Posterior vena cava (tissue), 2 donors: ENCODE measurements at regions of chr4 and their contacts with region 1.

Region 1: GRCh38 chr4:117845270-117845669 is 189.0 kb upstream of the NDST3 start:
- DNase-seq: no peak

Region 2: DNA sequence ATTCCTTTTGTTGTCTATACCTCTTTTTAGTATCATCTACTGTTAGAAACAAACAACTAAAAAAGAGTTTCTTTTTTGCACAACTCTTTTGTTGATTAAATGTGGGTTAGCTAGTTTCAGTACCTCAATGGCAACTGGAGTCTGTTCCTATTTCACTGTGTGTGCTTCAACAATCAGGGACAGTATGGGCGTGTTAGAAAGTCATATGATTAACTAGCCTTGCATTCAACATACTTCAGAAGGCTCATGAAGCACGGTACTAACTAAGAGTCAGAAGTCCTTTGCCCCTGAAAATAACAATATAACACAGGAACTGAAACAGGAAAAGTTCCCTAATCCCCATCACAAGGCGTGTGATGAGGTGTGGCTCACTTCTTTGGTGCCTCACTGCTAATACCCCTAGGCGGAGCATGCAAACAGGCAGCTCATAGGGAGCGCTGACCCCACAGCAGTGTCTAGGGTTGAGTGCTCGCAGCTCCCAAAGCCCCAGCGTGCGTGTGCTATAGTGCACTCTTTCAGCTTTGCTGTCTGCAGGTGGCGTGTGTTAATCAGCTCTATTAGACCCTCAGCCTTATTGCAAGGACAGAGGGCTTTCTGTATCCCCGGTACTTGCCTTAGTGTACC is 14.1 kb before region 1 on chr4:
- intact Hi-C with region 1: loop called in 1 of 2 experiments (anchors 1 kb)
- DNase-seq: no peak